ENCODE measurements at regions of chr14 and their contacts with region 1.

Region 1: DNA sequence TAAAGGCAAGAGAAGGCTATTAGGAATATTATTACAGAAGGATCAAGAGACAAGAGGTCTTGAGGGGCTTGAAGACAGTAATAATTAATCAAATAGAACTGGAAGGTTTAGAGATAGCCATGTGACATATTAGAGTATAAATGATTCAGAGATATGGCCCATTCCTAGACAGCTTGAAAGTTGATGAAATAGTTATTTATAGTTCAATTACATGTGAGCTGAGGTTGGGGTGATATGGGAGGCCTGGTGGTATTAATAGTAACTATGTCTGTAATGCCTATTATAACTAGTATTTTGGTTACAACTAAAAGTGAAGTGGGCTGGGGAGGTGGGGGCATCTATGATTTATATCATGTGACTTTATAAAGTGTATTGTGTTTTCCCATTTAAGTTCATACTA is 14.1 kb upstream of the MIS18BP1 start:
- DNase-seq: no peak
- ATAC-seq: peak; percentile 94 to 95 (median 94)
- H3K4me3 ChIP-seq: no peak overlapping the region
- H3K27ac ChIP-seq: peak overlapping the region; percentile 39
- H3K4me1 ChIP-seq: peaks cover 7% of the 10 kb centered on the region
- H3K27me3 ChIP-seq: no peaks in the 10 kb centered on the region
- CTCF ChIP-seq: no peak

Region 2: GRCh38 chr14:44912041-44912869 is 354.8 kb before region 1 on chr14:
- intact Hi-C with region 1: loop called (anchors 1 to 5 kb)
- DNase-seq: peak in 1 of 2 donors; percentile 15
- ATAC-seq: peak in 3 of 4 donors; percentile 37 to 56 (median 54)
- H3K4me3 ChIP-seq: peak overlapping the region; percentile 62
- H3K27ac ChIP-seq: no peak overlapping the region
- H3K4me1 ChIP-seq: no peaks in the 10 kb centered on the region
- H3K27me3 ChIP-seq: peaks cover 0 to 20% (median 11%) of the 10 kb centered on the region in 3 donors
- CTCF ChIP-seq: no peak